Caco-2 (cell line): ENCODE measurements at regions of chr6 and their contacts with region 1.

Region 1: GRCh38 chr6:107318100-107318736 is 141.1 kb downstream of the PDSS2 start:
- DNase-seq: peak; percentile 55 to 60
- H3K4me3 ChIP-seq: no peak overlapping the region
- H3K4me3 Mint-ChIP-seq: no peak overlapping the region
- H3K27ac Mint-ChIP-seq: no peak overlapping the region
- H3K4me1 ChIP-seq: no peaks in the 10 kb centered on the region
- H3K4me1 Mint-ChIP-seq: no peaks in the 10 kb centered on the region
- H3K27me3 ChIP-seq: no peaks in the 10 kb centered on the region
- H3K27me3 Mint-ChIP-seq: no peaks in the 10 kb centered on the region
- CTCF ChIP-seq: peak; percentile 46 to 83

Region 2: DNA sequence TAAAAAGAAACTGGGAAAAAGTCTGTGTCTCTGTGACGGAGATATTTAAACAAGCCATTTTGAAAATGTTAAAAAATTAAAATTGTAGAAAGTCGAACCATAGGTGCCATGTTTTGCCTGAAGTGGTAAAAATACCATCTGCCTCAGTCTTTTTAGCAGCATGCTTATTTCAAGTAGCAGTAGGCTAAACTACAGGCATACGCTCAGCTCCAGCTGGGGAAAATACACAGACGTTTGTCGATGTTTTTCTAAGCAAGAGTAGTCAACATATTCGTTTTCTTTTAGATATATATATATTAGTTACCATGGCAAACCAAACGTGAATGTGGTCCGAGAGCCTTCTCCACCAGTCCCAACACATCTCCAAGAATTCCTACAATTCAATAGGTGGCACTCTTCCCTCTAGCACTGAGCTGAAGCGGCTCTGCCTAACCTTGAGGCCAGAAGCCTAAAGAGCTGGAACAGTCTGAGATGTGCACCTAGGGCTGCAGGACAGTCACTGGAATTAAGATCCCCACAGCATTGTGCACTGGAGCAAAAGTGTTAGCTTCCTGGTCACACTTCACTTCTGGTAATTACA is 132.7 kb before region 1 on chr6:
- CTCF ChIA-PET with region 1: interaction called, 20 read pairs
- POLR2A ChIA-PET with region 1: no interaction called
- intact Hi-C with region 1: loop called (anchors 5 kb)
- DNase-seq: peak; percentile 44
- H3K4me3 ChIP-seq: no peak overlapping the region
- H3K4me3 Mint-ChIP-seq: no peak overlapping the region
- H3K27ac Mint-ChIP-seq: no peak overlapping the region
- H3K4me1 ChIP-seq: no peaks in the 10 kb centered on the region
- H3K4me1 Mint-ChIP-seq: no peaks in the 10 kb centered on the region
- H3K27me3 ChIP-seq: no peaks in the 10 kb centered on the region
- H3K27me3 Mint-ChIP-seq: no peaks in the 10 kb centered on the region
- CTCF ChIP-seq: peak; percentile 18 to 59

Region 3: GRCh38 chr6:107304421-107305025 is 13.7 kb before region 1 on chr6:
- CTCF ChIA-PET with region 1: interaction called, 15 read pairs
- POLR2A ChIA-PET with region 1: no interaction called
- intact Hi-C with region 1: no loop called
- DNase-seq: no peak
- H3K4me3 ChIP-seq: no peak overlapping the region
- H3K4me3 Mint-ChIP-seq: no peak overlapping the region
- H3K27ac Mint-ChIP-seq: no peak overlapping the region
- H3K4me1 ChIP-seq: no peaks in the 10 kb centered on the region
- H3K4me1 Mint-ChIP-seq: no peaks in the 10 kb centered on the region
- H3K27me3 ChIP-seq: no peaks in the 10 kb centered on the region
- H3K27me3 Mint-ChIP-seq: no peaks in the 10 kb centered on the region
- CTCF ChIP-seq: no peak

Region 4: GRCh38 chr6:107390685-107391435 is 72.6 kb after region 1 on chr6:
- CTCF ChIA-PET with region 1: interaction called, 13 read pairs
- POLR2A ChIA-PET with region 1: no interaction called
- intact Hi-C with region 1: no loop called
- DNase-seq: no peak
- H3K4me3 ChIP-seq: no peak overlapping the region
- H3K4me3 Mint-ChIP-seq: no peak overlapping the region
- H3K27ac Mint-ChIP-seq: no peak overlapping the region
- H3K4me1 ChIP-seq: no peaks in the 10 kb centered on the region; the same call in 1 of the 2 replicates
- H3K4me1 Mint-ChIP-seq: peaks cover 7% of the 10 kb centered on the region
- H3K27me3 ChIP-seq: no peaks in the 10 kb centered on the region
- H3K27me3 Mint-ChIP-seq: no peaks in the 10 kb centered on the region
- CTCF ChIP-seq: no peak

Region 5: GRCh38 chr6:107418118-107418517 is 99.9 kb after region 1 on chr6:
- CTCF ChIA-PET with region 1: interaction called, 7 read pairs
- POLR2A ChIA-PET with region 1: no interaction called
- intact Hi-C with region 1: loop called (anchors 1 kb)
- DNase-seq: peak in 1 of 2 experiments; percentile 5
- H3K4me3 ChIP-seq: no peak overlapping the region
- H3K4me3 Mint-ChIP-seq: no peak overlapping the region
- H3K27ac Mint-ChIP-seq: no peak overlapping the region
- H3K4me1 ChIP-seq: no peaks in the 10 kb centered on the region
- H3K4me1 Mint-ChIP-seq: no peaks in the 10 kb centered on the region
- H3K27me3 ChIP-seq: no peaks in the 10 kb centered on the region
- H3K27me3 Mint-ChIP-seq: no peaks in the 10 kb centered on the region
- CTCF ChIP-seq: peak; percentile 30 to 60

Region 6: DNA sequence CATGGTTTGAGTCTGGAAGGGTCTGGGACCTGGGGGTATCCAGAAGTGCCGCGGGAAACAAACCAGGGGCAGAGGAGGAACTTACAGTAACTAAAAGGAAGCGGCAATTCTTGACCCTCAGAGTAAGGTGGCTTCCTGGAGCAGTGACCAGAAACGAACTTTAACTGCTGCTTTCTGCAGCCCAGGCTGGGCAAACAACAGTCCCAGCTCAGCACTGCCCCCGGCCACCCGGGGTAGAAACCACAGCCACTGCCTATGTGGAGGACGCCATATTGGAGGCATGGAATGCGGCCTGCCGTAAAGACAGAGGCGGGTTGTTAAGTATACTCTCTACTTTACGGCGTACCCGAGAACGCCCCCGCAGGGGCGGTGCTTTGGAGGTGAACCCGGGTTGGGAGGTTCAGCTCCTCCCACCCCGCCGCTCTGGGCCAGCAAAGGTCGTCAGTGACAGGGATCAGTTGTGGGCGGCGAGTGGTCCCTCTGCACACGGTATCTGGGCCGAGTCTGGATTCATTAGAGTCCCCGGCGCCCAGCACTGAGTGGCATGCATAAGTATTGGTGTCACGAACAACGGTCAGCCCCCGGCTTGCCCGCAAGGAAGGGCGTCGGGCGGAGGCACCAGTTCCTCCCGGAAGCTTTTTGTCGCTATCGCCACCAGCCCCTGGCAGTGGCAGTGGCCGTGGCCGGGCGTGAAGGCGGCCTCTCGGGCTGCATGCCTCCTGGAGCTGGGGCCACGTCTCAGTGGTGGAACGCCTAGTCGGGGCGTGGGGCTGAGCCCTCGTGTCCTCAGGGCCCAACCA is 141.3 kb after region 1 on chr6 and contains the start of gene PDSS2:
- CTCF ChIA-PET with region 1: interaction called, 44 read pairs
- POLR2A ChIA-PET with region 1: interaction called, 10 read pairs
- intact Hi-C with region 1: loop called (anchors 1 kb)
- DNase-seq: peak; percentile 97 to 98
- H3K4me3 ChIP-seq: peak within 1 kb of the TSS; percentile 85
- H3K4me3 Mint-ChIP-seq: peak within 1 kb of the TSS; percentile 88
- H3K27ac Mint-ChIP-seq: peak within 1 kb of the TSS; percentile 89
- H3K4me1 ChIP-seq: no peaks in the 10 kb centered on the region
- H3K4me1 Mint-ChIP-seq: peaks cover 6% of the 10 kb centered on the region
- H3K27me3 ChIP-seq: no peaks in the 10 kb centered on the region
- H3K27me3 Mint-ChIP-seq: no peaks in the 10 kb centered on the region
- CTCF ChIP-seq: peak; percentile 23 to 61
- total RNA-seq, gene PDSS2: 10.3 and 11.4 TPM in 2 replicates

Region 7: DNA sequence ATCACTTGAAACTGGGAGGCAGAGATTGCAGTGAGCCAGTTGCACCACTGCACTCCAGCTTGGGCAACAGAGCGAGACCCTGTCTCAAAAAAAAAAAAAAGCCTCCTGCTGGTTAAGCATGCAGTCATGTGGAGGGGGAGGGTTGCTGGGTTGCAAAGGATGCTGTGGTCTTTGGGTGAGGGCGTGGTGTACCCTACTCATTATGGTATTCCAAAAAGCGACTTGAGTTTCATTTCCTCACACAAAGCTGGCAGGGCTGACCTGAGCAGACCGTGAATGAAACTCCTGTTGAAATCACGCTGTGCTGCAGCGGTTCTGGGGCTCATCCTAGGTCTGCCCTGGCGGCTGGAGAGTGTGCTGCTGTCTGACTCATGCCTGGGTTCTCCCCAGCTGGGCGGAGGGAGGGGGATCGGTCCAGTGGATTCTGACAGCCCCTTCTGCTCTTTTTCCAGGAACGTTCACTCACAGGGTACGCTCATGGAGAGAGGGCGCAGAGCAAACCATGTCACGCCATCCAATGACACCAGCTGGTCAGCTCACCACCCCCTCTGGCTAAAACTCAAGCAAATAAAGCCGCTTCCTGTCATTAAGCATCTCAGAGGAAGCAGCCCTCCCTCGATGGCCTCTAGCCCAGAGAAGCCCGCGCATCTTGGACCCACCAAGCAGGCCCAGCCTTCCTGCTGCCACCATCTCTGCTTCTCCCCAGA is 339.7 kb after region 1 on chr6:
- CTCF ChIA-PET with region 1: interaction called, 8 read pairs
- POLR2A ChIA-PET with region 1: no interaction called
- intact Hi-C with region 1: loop called (anchors 1 kb)
- DNase-seq: no peak
- H3K4me3 ChIP-seq: no peak overlapping the region
- H3K4me3 Mint-ChIP-seq: no peak overlapping the region
- H3K27ac Mint-ChIP-seq: no peak overlapping the region
- H3K4me1 ChIP-seq: no peaks in the 10 kb centered on the region
- H3K4me1 Mint-ChIP-seq: peaks cover 7% of the 10 kb centered on the region
- H3K27me3 ChIP-seq: no peaks in the 10 kb centered on the region
- H3K27me3 Mint-ChIP-seq: peaks cover 6% of the 10 kb centered on the region
- CTCF ChIP-seq: no peak